AG04449 (cell line): ENCODE measurements at regions of chr3 and their contacts with region 1.

Region 1: DNA sequence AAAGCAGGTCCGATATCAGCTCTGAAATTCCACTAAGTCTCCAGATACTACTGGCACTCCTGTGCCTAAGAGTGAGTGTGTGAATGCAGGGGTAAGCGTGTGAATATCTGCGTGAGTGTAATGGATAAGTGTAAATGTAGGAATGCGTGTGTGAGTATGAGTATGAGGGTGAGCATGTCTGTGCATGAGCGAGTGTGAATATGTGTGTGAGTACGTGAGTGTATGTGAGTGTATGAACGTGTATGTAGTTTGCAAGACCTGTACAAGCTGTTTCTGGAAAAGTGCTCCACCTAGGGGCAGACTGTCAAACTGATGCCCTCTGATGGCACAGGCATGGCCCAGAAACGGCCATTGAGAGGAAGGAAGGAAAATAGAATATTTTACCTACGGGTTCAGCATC is 24.4 kb upstream of the FRMD4B start:
- DNase-seq: no peak
- H3K4me3 ChIP-seq: no peak overlapping the region
- CTCF ChIP-seq: peak; percentile 80

Region 2: DNA sequence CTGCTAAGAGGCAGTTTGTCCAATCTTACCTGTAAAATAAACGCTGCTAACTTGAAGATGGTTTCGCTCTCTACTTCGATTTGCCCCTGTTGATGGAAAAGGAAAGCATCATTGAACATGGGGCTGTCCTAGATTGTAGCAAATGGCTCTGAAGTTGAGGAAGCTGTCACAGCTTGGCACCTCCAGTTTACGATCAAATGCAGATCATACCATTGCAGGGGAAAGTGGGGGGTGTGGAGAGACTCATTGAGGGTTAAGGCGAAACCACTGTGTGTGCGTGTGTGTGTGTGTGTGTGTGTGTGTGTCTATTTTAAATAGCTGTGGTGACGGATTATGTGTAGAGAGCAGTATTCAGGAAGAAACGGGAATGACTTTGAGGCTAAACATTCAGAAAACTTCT is 160.2 kb before region 1 on chr3:
- CTCF ChIA-PET with region 1: no interaction called
- POLR2A ChIA-PET with region 1: no interaction called
- DNase-seq: no peak
- H3K4me3 ChIP-seq: no peak overlapping the region
- CTCF ChIP-seq: no peak

Region 3: GRCh38 chr3:69324362-69325025 is 85.8 kb before region 1 on chr3:
- CTCF ChIA-PET with region 1: interaction called, 19 read pairs
- POLR2A ChIA-PET with region 1: no interaction called
- DNase-seq: no peak
- H3K4me3 ChIP-seq: no peak overlapping the region
- CTCF ChIP-seq: peak; percentile 3

Region 4: GRCh38 chr3:69368129-69368741 is 42.0 kb before region 1 on chr3:
- CTCF ChIA-PET with region 1: interaction called, 12 read pairs
- POLR2A ChIA-PET with region 1: no interaction called
- DNase-seq: no peak
- H3K4me3 ChIP-seq: no peak overlapping the region
- CTCF ChIP-seq: no peak

Region 5: DNA sequence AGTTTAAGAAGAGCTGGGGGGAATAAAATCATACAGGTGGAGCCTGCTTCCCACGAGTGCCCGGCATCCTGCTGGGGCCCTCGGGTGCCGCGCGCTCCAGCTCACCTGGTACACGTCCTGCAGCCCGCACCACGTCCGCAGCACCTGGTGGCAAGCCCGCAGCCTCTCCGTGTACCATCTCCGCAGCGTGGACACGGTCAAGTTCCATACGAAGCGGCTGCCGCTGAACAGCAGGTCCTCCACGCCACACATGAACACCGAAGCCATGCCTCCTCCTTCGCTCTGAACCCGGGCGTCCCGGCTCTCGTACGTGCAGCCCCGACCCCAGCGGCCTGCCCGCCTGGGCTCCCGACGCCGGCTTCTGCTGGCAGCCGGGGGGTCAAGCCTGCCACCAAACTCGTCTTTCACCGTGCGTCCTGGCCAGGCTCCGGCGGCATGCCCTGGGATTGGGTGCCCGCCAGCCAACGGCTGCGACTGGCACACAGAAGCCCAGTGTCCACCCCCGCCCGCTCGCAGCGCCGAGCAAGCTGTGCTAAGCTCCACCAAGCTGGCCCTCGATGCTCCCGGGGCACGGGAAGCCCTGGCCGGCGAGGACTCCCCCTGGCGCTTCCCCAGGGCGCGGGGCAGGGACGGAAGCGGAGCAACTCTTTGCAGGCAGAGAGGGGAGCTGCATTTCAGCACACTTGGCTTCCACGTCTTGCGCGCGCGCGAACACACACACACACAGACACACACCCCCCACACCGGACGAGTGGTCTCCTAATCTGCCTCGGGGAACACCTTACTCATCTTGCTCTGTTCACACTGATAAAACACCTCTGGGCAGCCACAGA is 24.3 kb before region 1 on chr3 and contains the start of gene FRMD4B:
- CTCF ChIA-PET with region 1: interaction called, 32 read pairs
- POLR2A ChIA-PET with region 1: no interaction called
- DNase-seq: no peak
- H3K4me3 ChIP-seq: peak within 1 kb of the TSS; percentile 64
- CTCF ChIP-seq: peak; percentile 55

Region 6: GRCh38 chr3:69425261-69425660 is 15.0 kb after region 1 on chr3:
- CTCF ChIA-PET with region 1: interaction called, 123 read pairs
- POLR2A ChIA-PET with region 1: interaction called, 3 read pairs
- DNase-seq: no peak
- H3K4me3 ChIP-seq: no peak overlapping the region
- CTCF ChIP-seq: peak; percentile 66